ENCODE measurements at regions of chr15 and their contacts with region 1.

Region 1: GRCh38 chr15:24956111-24956838 is 1.5 kb downstream of the SNRPN start:
- DNase-seq: peak; percentile 86
- ATAC-seq: peak; percentile 85

Region 2: GRCh38 chr15:24856397-24857390 is 99.6 kb before region 1 on chr15:
- intact Hi-C with region 1: loop called (anchors 5 kb)
- DNase-seq: no peak
- ATAC-seq: peak; percentile 74

Region 3: GRCh38 chr15:24901409-24901808 is 54.9 kb before region 1 on chr15:
- intact Hi-C with region 1: no loop called
- DNase-seq: no peak
- ATAC-seq: no peak

Measured in Right ventricle myocardium inferior (tissue), 1 donor.